ENCODE measurements at regions of chr11 and their contacts with region 1.

Region 1: GRCh38 chr11:20671856-20672546 is 2.6 kb downstream of the NELL1 start:
- DNase-seq: peak; percentile 42
- H3K4me3 ChIP-seq: no peak overlapping the region
- H3K27ac ChIP-seq: no peak overlapping the region
- H3K4me1 ChIP-seq: peaks cover 8% of the 10 kb centered on the region
- H3K27me3 ChIP-seq: peaks cover 51% of the 10 kb centered on the region
- CTCF ChIP-seq: peak; percentile 48

Region 2: GRCh38 chr11:20790622-20791021 is 118.6 kb after region 1 on chr11:
- CTCF ChIA-PET with region 1: no interaction called
- POLR2A ChIA-PET with region 1: no interaction called
- intact Hi-C with region 1: no loop called
- DNase-seq: no peak
- H3K4me3 ChIP-seq: no peak overlapping the region
- H3K27ac ChIP-seq: no peak overlapping the region
- H3K4me1 ChIP-seq: no peaks in the 10 kb centered on the region
- H3K27me3 ChIP-seq: no peaks in the 10 kb centered on the region
- CTCF ChIP-seq: no peak

Region 3: GRCh38 chr11:20873054-20873453 is 201.1 kb after region 1 on chr11:
- CTCF ChIA-PET with region 1: interaction called, 3 read pairs
- POLR2A ChIA-PET with region 1: no interaction called
- intact Hi-C with region 1: loop called (anchors 5 kb)
- DNase-seq: peak; percentile 58
- H3K4me3 ChIP-seq: no peak overlapping the region
- H3K27ac ChIP-seq: no peak overlapping the region
- H3K4me1 ChIP-seq: no peaks in the 10 kb centered on the region
- H3K27me3 ChIP-seq: no peaks in the 10 kb centered on the region
- CTCF ChIP-seq: peak; percentile 61

Region 4: GRCh38 chr11:21160140-21160539 is 488.1 kb after region 1 on chr11:
- CTCF ChIA-PET with region 1: interaction called, 15 read pairs
- POLR2A ChIA-PET with region 1: no interaction called
- intact Hi-C with region 1: no loop called
- DNase-seq: no peak
- H3K4me3 ChIP-seq: no peak overlapping the region
- H3K27ac ChIP-seq: no peak overlapping the region
- H3K4me1 ChIP-seq: no peaks in the 10 kb centered on the region
- H3K27me3 ChIP-seq: no peaks in the 10 kb centered on the region
- CTCF ChIP-seq: no peak